MCF 10A (cell line): ENCODE measurements at regions of chr16 and their contacts with region 1.

Region 1: DNA sequence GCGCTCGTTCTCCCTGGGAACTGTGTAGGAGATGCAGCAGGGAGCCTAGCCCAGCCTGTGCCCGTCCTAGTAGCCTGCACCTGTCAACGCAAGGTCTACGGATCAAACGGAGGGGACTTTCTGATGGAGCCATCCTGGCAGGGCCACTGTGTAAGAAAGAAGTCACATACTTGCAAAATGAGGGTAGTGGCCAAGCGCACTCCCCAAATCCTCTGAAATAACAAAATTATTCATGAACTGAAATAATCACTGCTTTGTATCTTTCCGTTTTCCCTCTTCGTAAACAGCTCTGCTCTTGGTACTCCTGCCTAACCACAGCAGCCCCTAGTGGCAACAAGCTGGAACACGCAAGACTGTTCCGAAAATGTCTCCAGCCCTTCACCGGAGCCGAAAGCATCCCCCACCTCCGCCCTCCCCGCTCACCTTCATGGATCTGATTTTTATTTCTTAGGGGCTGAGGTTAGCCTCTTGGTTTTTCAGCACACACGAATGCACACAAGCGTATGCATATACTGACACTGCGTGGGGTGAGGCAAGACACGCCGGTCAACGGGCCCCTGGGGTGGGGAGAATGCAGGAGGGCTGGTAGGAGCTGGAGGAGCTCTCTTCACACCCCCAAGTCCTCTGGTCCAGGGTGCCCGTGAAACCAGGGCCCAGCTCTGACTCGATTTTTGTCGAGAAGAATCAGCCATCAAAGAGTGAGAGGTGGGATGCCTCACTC is 100.8 kb downstream of the ABCC12 start:
- DNase-seq: peak; percentile 55
- H3K4me3 Mint-ChIP-seq: no peak overlapping the region
- H3K27ac Mint-ChIP-seq: no peak overlapping the region
- H3K4me1 Mint-ChIP-seq: peaks cover 10% of the 10 kb centered on the region
- H3K27me3 Mint-ChIP-seq: no peaks in the 10 kb centered on the region
- CTCF ChIP-seq: peak; percentile 89

Region 2: DNA sequence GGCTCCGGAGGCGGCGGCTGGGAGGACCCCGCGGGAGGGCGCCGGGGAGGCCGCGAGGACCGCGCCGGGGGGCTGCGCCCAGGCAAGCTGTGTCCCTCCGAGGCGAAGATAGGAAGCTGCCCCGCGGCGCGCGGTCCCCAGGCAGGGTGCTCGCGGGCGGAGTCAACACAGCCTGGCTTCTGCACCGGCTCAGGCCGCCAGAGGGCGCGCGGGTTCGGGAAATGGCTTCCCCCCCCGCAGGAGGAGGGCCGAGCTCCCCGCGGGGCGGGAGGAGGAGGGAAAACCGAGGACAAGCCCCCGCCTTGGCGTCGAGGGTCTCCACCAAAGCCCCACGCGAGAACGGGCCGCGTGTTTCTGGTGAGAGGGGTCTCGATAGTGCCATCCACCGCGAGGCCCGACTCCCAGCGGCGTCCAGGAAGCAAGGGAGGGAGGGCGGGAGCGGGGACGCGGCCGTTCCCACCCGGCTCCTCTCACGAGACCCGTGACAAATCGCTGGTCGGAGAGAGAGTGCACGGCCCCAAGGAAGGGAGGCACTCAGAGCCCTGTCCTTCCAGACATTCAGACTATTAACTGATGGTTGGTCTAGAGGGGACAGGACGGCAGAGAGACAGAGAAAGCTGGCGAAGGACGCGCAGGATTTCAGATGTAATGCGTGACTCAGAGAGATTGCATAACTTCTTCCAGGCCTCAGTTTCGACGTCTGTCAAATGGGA is 1017.1 kb before region 1 on chr16:
- CTCF ChIA-PET with region 1: interaction called, 4 read pairs
- POLR2A ChIA-PET with region 1: no interaction called
- intact Hi-C with region 1: loop called (anchors 10 kb)
- DNase-seq: peak; percentile 78
- H3K4me3 Mint-ChIP-seq: peak overlapping the region; percentile 73
- H3K27ac Mint-ChIP-seq: no peak overlapping the region
- H3K4me1 Mint-ChIP-seq: peaks cover 5% of the 10 kb centered on the region
- H3K27me3 Mint-ChIP-seq: no peaks in the 10 kb centered on the region
- CTCF ChIP-seq: peak; percentile 89

Region 3: GRCh38 chr16:47258874-47259461 is 796.1 kb before region 1 on chr16:
- CTCF ChIA-PET with region 1: no interaction called
- POLR2A ChIA-PET with region 1: no interaction called
- intact Hi-C with region 1: loop called (anchors 2 kb)
- DNase-seq: peak; percentile 47
- H3K4me3 Mint-ChIP-seq: no peak overlapping the region
- H3K27ac Mint-ChIP-seq: no peak overlapping the region
- H3K4me1 Mint-ChIP-seq: peaks cover 4% of the 10 kb centered on the region
- H3K27me3 Mint-ChIP-seq: no peaks in the 10 kb centered on the region
- CTCF ChIP-seq: peak; percentile 60

Region 4: GRCh38 chr16:47460711-47461597 is 594.1 kb before region 1 on chr16 and contains the starts of genes ITFG1 and PHKB:
- CTCF ChIA-PET with region 1: interaction called, 4 read pairs
- POLR2A ChIA-PET with region 1: interaction called, 3 read pairs
- intact Hi-C with region 1: loop called (anchors 5 kb)
- DNase-seq: peak; percentile 90
- H3K4me3 Mint-ChIP-seq: peak within 1 kb of the TSS; percentile 94
- H3K27ac Mint-ChIP-seq: peak within 1 kb of the TSS; percentile 99
- H3K4me1 Mint-ChIP-seq: peaks cover 35% of the 10 kb centered on the region
- H3K27me3 Mint-ChIP-seq: no peaks in the 10 kb centered on the region
- CTCF ChIP-seq: no peak
- total RNA-seq, gene ITFG1: 35.4 and 44.0 TPM in 2 replicates
- total RNA-seq, gene PHKB: 62.2 and 67.3 TPM in 2 replicates

Region 5: DNA sequence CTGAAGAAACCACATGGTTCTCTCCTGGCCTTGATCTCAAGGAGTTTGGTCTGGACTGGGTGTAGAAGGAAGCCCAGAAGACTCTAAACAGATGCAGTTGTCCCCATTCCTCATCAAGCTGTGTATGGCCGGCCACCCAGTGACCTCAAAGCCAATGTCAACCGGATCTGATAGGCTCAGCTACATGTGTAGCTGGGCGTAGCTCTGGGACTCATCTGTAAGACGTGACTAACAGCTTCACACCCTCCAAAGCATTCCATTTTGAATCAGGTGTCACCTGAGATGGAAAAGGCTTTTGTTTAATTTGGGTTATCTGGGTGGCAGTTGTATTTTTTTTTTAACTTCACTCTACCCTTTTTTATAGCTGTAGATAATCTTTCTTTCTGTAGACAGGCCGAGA is 29.7 kb before region 1 on chr16:
- CTCF ChIA-PET with region 1: interaction called, 10 read pairs
- POLR2A ChIA-PET with region 1: no interaction called
- intact Hi-C with region 1: no loop called
- DNase-seq: no peak
- H3K4me3 Mint-ChIP-seq: no peak overlapping the region
- H3K27ac Mint-ChIP-seq: no peak overlapping the region
- H3K4me1 Mint-ChIP-seq: no peaks in the 10 kb centered on the region
- H3K27me3 Mint-ChIP-seq: no peaks in the 10 kb centered on the region
- CTCF ChIP-seq: no peak

Region 6: DNA sequence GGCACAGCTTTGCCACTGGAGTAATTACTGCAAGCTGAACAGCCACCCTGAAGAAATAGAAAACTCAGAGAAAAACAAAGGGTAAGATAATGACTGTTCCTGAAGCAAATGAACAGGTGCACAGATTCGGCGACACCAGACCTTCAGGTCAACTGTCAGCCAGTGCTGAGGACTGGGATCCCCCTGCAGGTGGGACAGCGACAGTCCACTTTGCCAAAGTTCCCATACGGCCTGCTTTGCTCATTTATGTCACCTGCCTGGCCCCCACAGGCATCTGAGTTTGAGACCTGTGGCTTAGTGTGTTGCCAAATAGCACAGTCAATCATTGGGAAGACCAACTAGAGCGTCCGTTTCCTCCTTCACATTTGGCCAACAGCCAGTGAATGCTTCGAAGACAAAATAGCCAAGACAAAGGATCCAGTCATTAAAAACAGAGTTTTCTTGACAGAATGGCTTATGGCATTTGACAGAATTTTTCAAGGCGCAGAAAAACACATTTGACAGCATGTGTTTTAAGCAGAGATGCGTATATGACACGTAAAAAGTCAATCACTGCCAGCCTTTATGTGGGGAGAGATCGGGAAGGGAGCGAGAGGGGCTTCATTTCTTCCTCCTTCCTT is 13.1 kb before region 1 on chr16:
- CTCF ChIA-PET with region 1: interaction called, 17 read pairs
- POLR2A ChIA-PET with region 1: no interaction called
- intact Hi-C with region 1: no loop called
- DNase-seq: peak; percentile 4
- H3K4me3 Mint-ChIP-seq: no peak overlapping the region
- H3K27ac Mint-ChIP-seq: no peak overlapping the region
- H3K4me1 Mint-ChIP-seq: no peaks in the 10 kb centered on the region
- H3K27me3 Mint-ChIP-seq: no peaks in the 10 kb centered on the region
- CTCF ChIP-seq: no peak

Region 7: GRCh38 chr16:48156790-48157209 is 101.8 kb after region 1 on chr16:
- CTCF ChIA-PET with region 1: interaction called, 21 read pairs
- POLR2A ChIA-PET with region 1: no interaction called
- intact Hi-C with region 1: no loop called
- DNase-seq: peak; percentile 78
- H3K4me3 Mint-ChIP-seq: no peak overlapping the region
- H3K27ac Mint-ChIP-seq: no peak overlapping the region
- H3K4me1 Mint-ChIP-seq: peaks cover 10% of the 10 kb centered on the region
- H3K27me3 Mint-ChIP-seq: no peaks in the 10 kb centered on the region
- CTCF ChIP-seq: peak; percentile 96